Caco-2 (cell line): ENCODE measurements at regions of chr12 and their contacts with region 1.

Region 1: GRCh38 chr12:11486623-11487444 is 91.5 kb upstream of the PRB2 start:
- DNase-seq: peak; percentile 83 to 85
- H3K4me3 ChIP-seq: no peak overlapping the region
- H3K4me3 Mint-ChIP-seq: no peak overlapping the region
- H3K27ac Mint-ChIP-seq: no peak overlapping the region
- H3K4me1 ChIP-seq: no peaks in the 10 kb centered on the region
- H3K4me1 Mint-ChIP-seq: no peaks in the 10 kb centered on the region
- H3K27me3 ChIP-seq: no peaks in the 10 kb centered on the region; the same call in 1 of the 2 replicates
- H3K27me3 Mint-ChIP-seq: peaks cover 11% of the 10 kb centered on the region
- CTCF ChIP-seq: peak; percentile 96 to 100

Region 2: GRCh38 chr12:10959804-10960203 is 527.0 kb before region 1 on chr12:
- CTCF ChIA-PET with region 1: no interaction called
- POLR2A ChIA-PET with region 1: no interaction called
- intact Hi-C with region 1: loop called (anchors 5 kb)
- DNase-seq: peak in 1 of 2 experiments; percentile 29
- H3K4me3 ChIP-seq: no peak overlapping the region
- H3K4me3 Mint-ChIP-seq: no peak overlapping the region
- H3K27ac Mint-ChIP-seq: no peak overlapping the region
- H3K4me1 ChIP-seq: peaks cover 5% of the 10 kb centered on the region
- H3K4me1 Mint-ChIP-seq: peaks cover 7% of the 10 kb centered on the region
- H3K27me3 ChIP-seq: no peaks in the 10 kb centered on the region
- H3K27me3 Mint-ChIP-seq: no peaks in the 10 kb centered on the region
- CTCF ChIP-seq: no peak

Region 3: GRCh38 chr12:11228296-11228879 is 258.4 kb before region 1 on chr12:
- CTCF ChIA-PET with region 1: interaction called, 19 read pairs
- POLR2A ChIA-PET with region 1: no interaction called
- intact Hi-C with region 1: loop called (anchors 1 kb)
- DNase-seq: peak; percentile 71 to 81
- H3K4me3 ChIP-seq: no peak overlapping the region
- H3K4me3 Mint-ChIP-seq: no peak overlapping the region
- H3K27ac Mint-ChIP-seq: no peak overlapping the region
- H3K4me1 ChIP-seq: no peaks in the 10 kb centered on the region
- H3K4me1 Mint-ChIP-seq: no peaks in the 10 kb centered on the region
- H3K27me3 ChIP-seq: no peaks in the 10 kb centered on the region
- H3K27me3 Mint-ChIP-seq: peaks cover 14% of the 10 kb centered on the region
- CTCF ChIP-seq: peak; percentile 93

Region 4: GRCh38 chr12:11524446-11524845 is 37.6 kb after region 1 on chr12:
- CTCF ChIA-PET with region 1: no interaction called
- POLR2A ChIA-PET with region 1: no interaction called
- intact Hi-C with region 1: no loop called
- DNase-seq: no peak
- H3K4me3 ChIP-seq: no peak overlapping the region
- H3K4me3 Mint-ChIP-seq: no peak overlapping the region
- H3K27ac Mint-ChIP-seq: no peak overlapping the region
- H3K4me1 ChIP-seq: no peaks in the 10 kb centered on the region
- H3K4me1 Mint-ChIP-seq: no peaks in the 10 kb centered on the region
- H3K27me3 ChIP-seq: no peaks in the 10 kb centered on the region; the same call in 1 of the 2 replicates
- H3K27me3 Mint-ChIP-seq: peaks cover 37% of the 10 kb centered on the region
- CTCF ChIP-seq: no peak